Activated T-helper 1 cell treated with anti-CD3 and anti-CD28 coated beads, Interleukin-12 subunit alpha, Interleukin-12 subunit beta, Interleukin-2, Interleukin-4 antibody, amounts not matched to agents 30 ng/mL and 10 ng/mL and 1 ng/mL, durations not matched to agents 14 hours and 24 hours and 36 hours (primary cell): ENCODE measurements at regions of chr15 and their contacts with region 1.

Region 1: DNA sequence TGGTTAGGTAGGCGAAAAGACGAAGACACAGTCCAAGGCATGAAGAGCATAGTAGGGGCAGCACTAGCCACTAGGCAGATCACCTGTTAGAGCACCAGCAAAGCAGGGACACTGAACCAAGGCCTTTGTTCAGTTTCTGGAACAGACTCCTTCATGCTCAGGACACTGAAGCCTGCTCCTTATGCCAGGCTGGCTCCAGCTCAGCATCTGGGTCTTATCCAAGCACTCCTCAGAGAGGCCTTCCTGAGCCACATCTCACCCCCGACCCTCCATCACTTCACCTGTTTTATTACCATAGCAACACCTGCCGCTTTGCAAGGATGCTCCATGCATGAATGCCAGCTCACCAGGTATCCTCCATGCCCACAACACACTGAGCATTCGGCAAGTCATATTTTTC is 206.3 kb upstream of the CHRNA7 start:
- DNase-seq: no peak
- H3K4me3 Mint-ChIP-seq: no peak overlapping the region
- H3K27ac Mint-ChIP-seq: no peak overlapping the region
- H3K4me1 Mint-ChIP-seq: no peaks in the 10 kb centered on the region
- H3K27me3 Mint-ChIP-seq: peaks cover 4% of the 10 kb centered on the region

Region 2: GRCh38 chr15:31776039-31776438 is 48.0 kb before region 1 on chr15:
- intact Hi-C with region 1: no loop called
- DNase-seq: no peak
- H3K4me3 Mint-ChIP-seq: no peak overlapping the region
- H3K27ac Mint-ChIP-seq: no peak overlapping the region
- H3K4me1 Mint-ChIP-seq: no peaks in the 10 kb centered on the region
- H3K27me3 Mint-ChIP-seq: peaks cover 5% of the 10 kb centered on the region

Region 3: GRCh38 chr15:31985607-31986006 is 161.6 kb after region 1 on chr15:
- intact Hi-C with region 1: loop called (anchors 10 kb)
- DNase-seq: no peak
- H3K4me3 Mint-ChIP-seq: no peak overlapping the region
- H3K27ac Mint-ChIP-seq: no peak overlapping the region
- H3K4me1 Mint-ChIP-seq: no peaks in the 10 kb centered on the region
- H3K27me3 Mint-ChIP-seq: no peaks in the 10 kb centered on the region